ENCODE measurements at regions of chr1 and their contacts with region 1.

Region 1: GRCh38 chr1:85307987-85308832 is 31.8 kb upstream of the BCL10 start:
- DNase-seq: peak; percentile 68 to 78
- ATAC-seq: peak; percentile 93 to 99
- H3K4me3 ChIP-seq: peak overlapping the region in 2 of 4 donors; percentile 10 to 48
- H3K27ac ChIP-seq: no peak overlapping the region
- H3K4me1 ChIP-seq: peaks cover 7 to 16% of the 10 kb centered on the region in 2 donors
- H3K27me3 ChIP-seq: no peaks in the 10 kb centered on the region
- CTCF ChIP-seq: peak; percentile 92 to 99 (median 95)
- POLR2A ChIP-seq: no peak

Region 2: GRCh38 chr1:85344256-85344694 is 36.1 kb after region 1 on chr1:
- in situ Hi-C with region 1: no loop called
- intact Hi-C with region 1: loop called (anchors 1 kb)
- DNase-seq: peak in 1 of 2 donors; percentile 27
- ATAC-seq: no peak
- H3K4me3 ChIP-seq: no peak overlapping the region
- H3K27ac ChIP-seq: peak overlapping the region in 2 of 4 donors; percentile 42 to 82
- H3K4me1 ChIP-seq: peaks cover 37 to 42% of the 10 kb centered on the region in 2 donors
- H3K27me3 ChIP-seq: no peaks in the 10 kb centered on the region
- CTCF ChIP-seq: peak; percentile 39 to 75 (median 51)
- POLR2A ChIP-seq: no peak

Region 3: DNA sequence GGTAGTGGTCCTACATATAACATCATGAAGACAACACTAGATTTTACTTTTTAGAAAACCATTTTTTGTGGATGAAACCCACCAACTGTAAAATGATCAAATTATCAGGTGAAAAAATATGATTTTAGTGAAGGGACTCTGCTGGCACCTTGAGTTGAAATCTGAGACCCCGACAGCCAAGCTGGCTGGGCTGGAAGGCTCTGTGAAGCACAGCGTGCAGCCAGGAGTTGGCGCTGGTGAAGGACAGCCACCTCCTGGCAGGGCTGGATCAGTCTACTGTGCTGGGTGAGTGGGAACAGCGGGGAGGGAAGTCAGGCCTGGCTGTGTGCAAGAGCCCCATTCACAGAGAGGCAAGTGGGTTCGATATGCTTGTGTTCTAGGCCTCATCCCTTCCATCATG is 108.8 kb after region 1 on chr1:
- in situ Hi-C with region 1: no loop called
- intact Hi-C with region 1: loop called (anchors 5 kb)
- DNase-seq: peak in 1 of 2 donors; percentile 49
- ATAC-seq: peak; percentile 84 to 85
- H3K4me3 ChIP-seq: no peak overlapping the region
- H3K27ac ChIP-seq: peak overlapping the region in 1 of 4 donors; percentile 9
- H3K4me1 ChIP-seq: peaks cover 0 to 21% of the 10 kb centered on the region in 2 donors
- H3K27me3 ChIP-seq: no peaks in the 10 kb centered on the region
- CTCF ChIP-seq: peak in 2 of 5 experiments; percentile 9 to 30
- POLR2A ChIP-seq: no peak

Region 4: DNA sequence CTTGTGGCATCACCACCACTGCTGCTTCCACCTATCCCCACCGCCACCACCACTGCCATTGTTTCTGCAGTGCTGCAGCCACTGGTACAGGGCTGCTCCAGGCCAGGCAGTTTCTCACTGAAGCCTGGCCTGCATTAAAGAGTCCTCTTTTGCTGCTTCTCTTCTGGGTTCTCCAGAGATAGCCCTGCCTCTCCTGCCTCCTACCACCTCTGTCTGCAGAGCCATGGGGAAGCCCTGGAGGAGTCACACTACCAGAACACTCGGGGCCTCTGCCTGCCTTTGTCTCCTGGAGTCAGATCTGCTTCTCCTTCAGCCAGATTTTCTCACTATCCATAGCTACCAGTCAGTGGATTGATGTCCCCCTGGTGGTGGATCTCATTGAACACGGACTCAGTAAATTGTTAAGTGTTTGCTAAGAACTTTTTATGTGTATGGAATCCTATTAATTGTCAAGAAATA is 194.4 kb after region 1 on chr1:
- in situ Hi-C with region 1: loop called in 2 of 4 experiments (anchors 5 to 10 kb)
- intact Hi-C with region 1: loop called (anchors 1 kb)
- DNase-seq: peak in 1 of 2 donors; percentile 9
- ATAC-seq: peak; percentile 77 to 86
- H3K4me3 ChIP-seq: no peak overlapping the region
- H3K27ac ChIP-seq: no peak overlapping the region
- H3K4me1 ChIP-seq: no peaks in the 10 kb centered on the region
- H3K27me3 ChIP-seq: no peaks in the 10 kb centered on the region
- CTCF ChIP-seq: peak in 4 of 5 experiments; percentile 41 to 68 (median 51)
- POLR2A ChIP-seq: no peak

Region 5: GRCh38 chr1:85707990-85708828 is 400.0 kb after region 1 on chr1 and contains the start of gene ZNHIT6:
- in situ Hi-C with region 1: no loop called
- intact Hi-C with region 1: loop called (anchors 5 kb)
- DNase-seq: peak; percentile 81 to 91
- ATAC-seq: peak; percentile 98
- H3K4me3 ChIP-seq: peak within 1 kb of the TSS; percentile 63 to 92 (median 78)
- H3K27ac ChIP-seq: peak within 1 kb of the TSS; percentile 80 to 91 (median 88)
- H3K4me1 ChIP-seq: peaks cover 11 to 19% of the 10 kb centered on the region in 2 donors
- H3K27me3 ChIP-seq: no peaks in the 10 kb centered on the region
- CTCF ChIP-seq: peak; percentile 14 to 43 (median 16)
- POLR2A ChIP-seq: peak in 1 of 2 donors; percentile 9
- total RNA-seq, gene ZNHIT6: 6.6 to 11.4 (median 7.8) TPM